ENCODE measurements at regions of chr4 and their contacts with region 1.

Region 1: DNA sequence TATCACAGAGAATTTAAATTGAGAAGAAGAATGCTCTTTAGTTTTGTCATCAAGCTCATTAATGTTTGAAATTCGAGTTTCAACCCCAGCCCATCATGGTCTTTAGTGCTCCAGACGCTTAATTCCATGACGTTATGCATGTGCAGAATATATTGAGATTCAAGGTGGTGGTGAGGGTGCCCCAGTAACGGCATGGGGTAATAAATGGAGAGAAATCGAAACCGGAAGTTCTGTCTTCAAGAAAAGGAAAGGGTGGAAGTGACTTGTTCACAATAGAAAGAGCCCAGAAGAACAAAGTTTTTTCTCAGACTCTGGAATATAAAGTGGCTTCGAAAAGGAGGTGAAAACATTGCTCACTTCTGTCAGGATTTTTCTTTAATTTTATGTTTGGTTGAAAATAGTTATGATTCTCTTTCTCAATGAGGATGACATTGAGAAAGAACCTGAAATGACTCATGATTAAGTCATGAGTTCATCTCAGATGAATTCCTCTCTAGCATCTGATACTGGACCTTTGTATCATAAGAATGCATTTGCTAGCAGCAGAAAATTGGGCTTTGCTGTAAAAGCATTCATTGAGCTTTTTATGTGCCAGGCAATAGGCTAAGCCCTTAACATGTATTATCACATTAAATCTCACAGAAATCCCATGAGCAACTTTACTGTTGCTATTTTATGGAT is 779 bp upstream of the DDX60L start:
- DNase-seq: peak; percentile 11 to 84 (median 62)
- ATAC-seq: peak; percentile 70 to 76
- H3K4me3 Mint-ChIP-seq: peak overlapping the region; percentile 90 to 100 (median 98)
- H3K27ac Mint-ChIP-seq: peak overlapping the region; percentile 97 to 100 (median 99)
- H3K4me1 Mint-ChIP-seq: peaks cover 31 to 72% (median 62%) of the 10 kb centered on the region in 4 donors
- H3K27me3 Mint-ChIP-seq: no peaks in the 10 kb centered on the region

Region 2: GRCh38 chr4:168318266-168318895 is 162.7 kb before region 1 on chr4 and contains the start of gene DDX60:
- POLR2A ChIA-PET with region 1: interaction called, 21 read pairs
- DNase-seq: peak; percentile 63 to 91 (median 81)
- ATAC-seq: peak; percentile 94 to 95
- H3K4me3 Mint-ChIP-seq: peak within 1 kb of the TSS; percentile 92 to 98 (median 96)
- H3K27ac Mint-ChIP-seq: peak within 1 kb of the TSS; percentile 96 to 99 (median 98)
- H3K4me1 Mint-ChIP-seq: peaks cover 17 to 63% (median 48%) of the 10 kb centered on the region in 4 donors
- H3K27me3 Mint-ChIP-seq: no peaks in the 10 kb centered on the region
- polyA plus RNA-seq, gene DDX60: 17.8 to 28.8 (median 21.4) TPM

Region 3: DNA sequence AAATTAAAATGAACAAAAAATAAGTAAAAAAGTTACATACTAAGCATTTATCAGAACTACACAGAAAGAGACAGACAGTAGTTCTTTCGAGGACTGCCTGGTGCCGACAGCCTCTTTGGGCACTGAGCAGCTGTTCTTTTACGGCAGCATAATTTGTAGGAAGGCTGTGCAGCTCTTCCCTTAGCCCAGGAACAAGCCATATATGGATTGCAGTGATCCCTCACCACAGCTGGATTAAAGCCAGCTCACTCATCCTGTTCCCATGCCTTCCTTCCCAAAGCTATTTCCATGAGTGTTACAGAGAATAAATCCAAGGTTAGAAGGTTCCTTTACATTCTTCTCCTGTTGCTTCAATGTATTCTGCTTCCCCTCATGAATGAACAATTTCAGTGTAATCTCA is 72.5 kb before region 1 on chr4:
- POLR2A ChIA-PET with region 1: no interaction called
- DNase-seq: no peak
- ATAC-seq: no peak
- H3K4me3 Mint-ChIP-seq: no peak overlapping the region
- H3K27ac Mint-ChIP-seq: peak overlapping the region in 1 of 10 donors; percentile 1
- H3K4me1 Mint-ChIP-seq: peaks cover 0 to 5% (median 0%) of the 10 kb centered on the region in 4 donors
- H3K27me3 Mint-ChIP-seq: no peaks in the 10 kb centered on the region

Region 4: GRCh38 chr4:168426350-168426749 is 54.7 kb before region 1 on chr4:
- POLR2A ChIA-PET with region 1: no interaction called
- DNase-seq: no peak
- ATAC-seq: no peak
- H3K4me3 Mint-ChIP-seq: no peak overlapping the region
- H3K27ac Mint-ChIP-seq: no peak overlapping the region
- H3K4me1 Mint-ChIP-seq: peaks cover under 1 to 9% (median 6%) of the 10 kb centered on the region in 4 donors
- H3K27me3 Mint-ChIP-seq: no peaks in the 10 kb centered on the region

Region 5: GRCh38 chr4:169010125-169011023 is 529.3 kb after region 1 on chr4 and contains the start of gene CBR4:
- POLR2A ChIA-PET with region 1: interaction called, 10 read pairs
- DNase-seq: peak; percentile 87 to 99 (median 95)
- ATAC-seq: peak; percentile 94 to 97
- H3K4me3 Mint-ChIP-seq: peak within 1 kb of the TSS; percentile 89 to 98 (median 96)
- H3K27ac Mint-ChIP-seq: peak within 1 kb of the TSS; percentile 93 to 99 (median 96)
- H3K4me1 Mint-ChIP-seq: peaks cover 16 to 46% (median 33%) of the 10 kb centered on the region in 4 donors
- H3K27me3 Mint-ChIP-seq: peaks cover 0 to 4% (median 2%) of the 10 kb centered on the region in 5 donors
- polyA plus RNA-seq, gene CBR4: 4.5 to 5.5 (median 4.9) TPM

Measured in naive thymus-derived CD8-positive, alpha-beta T cell (primary cell).